ENCODE measurements at regions of chr21 and their contacts with region 1.

Region 1: DNA sequence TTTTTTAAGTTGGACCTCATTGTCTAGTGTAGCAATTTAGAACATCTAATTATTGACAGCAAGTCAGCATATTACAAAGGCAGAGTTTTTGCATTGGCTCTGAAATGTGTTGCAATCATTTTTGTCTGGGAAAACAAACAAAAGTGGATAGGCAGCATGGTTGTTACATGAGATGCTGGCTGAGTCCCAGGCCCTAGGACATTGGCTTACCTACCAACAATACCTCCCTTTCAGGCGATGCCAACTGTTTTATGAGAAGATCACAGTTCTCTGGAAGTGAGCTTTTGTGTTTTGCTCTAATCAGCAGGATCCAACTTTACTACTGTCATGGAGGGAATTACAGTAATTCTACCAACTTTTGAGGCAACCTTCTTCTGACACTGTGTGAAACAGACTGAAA is 71.5 kb upstream of the CXADR start:
- DNase-seq: peak; percentile 97
- ATAC-seq: peak; percentile 91
- H3K4me3 ChIP-seq: peak overlapping the region in 1 of 3 experiments; percentile 35; a peak in 1 of 6 replicates
- H3K27ac ChIP-seq: peak overlapping the region; percentile 69
- H3K4me1 ChIP-seq: peaks cover 65% of the 10 kb centered on the region
- H3K27me3 ChIP-seq: no peaks in the 10 kb centered on the region
- CTCF ChIP-seq: no peak
- EP300 ChIP-seq: peak in 1 of 2 experiments; percentile 75; a peak in 2 of 4 replicates
- POLR2A ChIP-seq: no peak
- RAD21 ChIP-seq: no peak

Region 2: DNA sequence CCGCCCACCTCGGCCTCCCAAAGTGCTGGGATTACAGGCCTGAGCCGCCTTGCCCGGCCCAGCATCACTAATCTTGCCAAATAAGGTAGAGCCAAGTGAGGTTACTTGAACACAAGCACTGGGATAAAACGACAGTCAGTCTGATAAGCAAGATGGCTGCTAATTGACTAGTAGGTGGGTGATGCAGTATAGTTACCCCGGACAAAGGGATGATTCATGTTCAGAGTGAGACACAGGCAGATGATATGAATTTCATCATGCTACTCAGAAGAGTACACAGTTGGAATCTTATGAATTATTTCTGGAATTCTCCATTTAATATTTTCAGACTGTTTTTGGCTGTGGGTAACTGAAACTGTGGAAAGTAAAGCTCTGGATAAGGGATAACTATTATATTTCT is 1533.2 kb before region 1 on chr21:
- CTCF ChIA-PET with region 1: no interaction called
- POLR2A ChIA-PET with region 1: no interaction called
- in situ Hi-C with region 1: no loop called
- intact Hi-C with region 1: no loop called
- DNase-seq: no peak
- ATAC-seq: no peak
- H3K4me3 ChIP-seq: no peak overlapping the region
- H3K27ac ChIP-seq: no peak overlapping the region
- H3K4me1 ChIP-seq: no peaks in the 10 kb centered on the region
- H3K27me3 ChIP-seq: no peaks in the 10 kb centered on the region
- CTCF ChIP-seq: no peak
- EP300 ChIP-seq: no peak
- POLR2A ChIP-seq: no peak
- RAD21 ChIP-seq: no peak

Region 3: GRCh38 chr21:17454315-17455027 is 13.1 kb after region 1 on chr21:
- CTCF ChIA-PET with region 1: no interaction called
- POLR2A ChIA-PET with region 1: interaction called, 5 read pairs
- in situ Hi-C with region 1: no loop called
- intact Hi-C with region 1: loop called (anchors 1 kb)
- DNase-seq: peak; percentile 91
- ATAC-seq: peak; percentile 96
- H3K4me3 ChIP-seq: peak overlapping the region; percentile 54 to 78 (median 73)
- H3K27ac ChIP-seq: peak overlapping the region; percentile 83
- H3K4me1 ChIP-seq: peaks cover 42% of the 10 kb centered on the region
- H3K27me3 ChIP-seq: no peaks in the 10 kb centered on the region
- CTCF ChIP-seq: 0 out of 2 replicates have a peak, but pooled peaks have one; percentile 3
- EP300 ChIP-seq: peak in 1 of 2 experiments; percentile 25; a peak in 1 of 4 replicates
- POLR2A ChIP-seq: no peak
- RAD21 ChIP-seq: peak; percentile 35; the same call in 1 of the 2 replicates